AG04449 (cell line): ENCODE measurements at regions of chr5 and their contacts with region 1.

Region 1: GRCh38 chr5:72611118-72611730 is 104.0 kb upstream of the ZNF366 start:
- DNase-seq: no peak
- H3K4me3 ChIP-seq: no peak overlapping the region
- CTCF ChIP-seq: peak; percentile 94

Region 2: DNA sequence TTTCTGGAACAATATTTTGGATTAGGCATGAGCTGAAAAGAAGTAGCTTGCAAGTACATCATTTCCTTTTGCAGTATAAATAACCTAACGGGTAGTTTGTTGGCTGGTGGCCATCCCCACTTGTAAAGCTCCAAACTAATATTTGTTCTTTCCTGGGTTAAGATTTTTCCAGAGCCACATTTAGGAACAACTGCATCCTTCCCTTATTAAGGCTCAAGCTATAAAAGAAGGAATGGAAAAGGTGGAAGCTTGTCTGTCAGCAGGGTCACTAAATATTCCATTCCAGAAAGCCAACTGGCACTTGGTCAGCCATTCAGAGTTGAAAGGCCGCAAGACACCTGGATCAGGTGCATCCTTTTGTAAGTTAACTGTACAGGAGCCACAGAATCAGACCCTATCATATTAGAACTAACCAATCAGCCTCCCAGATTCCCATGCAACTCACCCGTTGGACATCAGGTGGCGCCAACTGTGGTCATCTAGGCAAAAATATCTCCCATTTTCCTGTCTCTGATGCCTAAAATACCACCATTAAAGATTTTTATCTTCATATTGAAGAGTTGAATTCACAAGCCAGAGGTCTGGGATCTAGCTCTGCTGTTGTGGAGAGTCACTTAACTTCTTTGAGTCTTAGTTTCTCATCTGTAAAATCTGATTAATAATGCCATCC is 208.1 kb before region 1 on chr5:
- CTCF ChIA-PET with region 1: no interaction called
- POLR2A ChIA-PET with region 1: no interaction called
- DNase-seq: no peak
- H3K4me3 ChIP-seq: no peak overlapping the region
- CTCF ChIP-seq: peak; percentile 7

Region 3: DNA sequence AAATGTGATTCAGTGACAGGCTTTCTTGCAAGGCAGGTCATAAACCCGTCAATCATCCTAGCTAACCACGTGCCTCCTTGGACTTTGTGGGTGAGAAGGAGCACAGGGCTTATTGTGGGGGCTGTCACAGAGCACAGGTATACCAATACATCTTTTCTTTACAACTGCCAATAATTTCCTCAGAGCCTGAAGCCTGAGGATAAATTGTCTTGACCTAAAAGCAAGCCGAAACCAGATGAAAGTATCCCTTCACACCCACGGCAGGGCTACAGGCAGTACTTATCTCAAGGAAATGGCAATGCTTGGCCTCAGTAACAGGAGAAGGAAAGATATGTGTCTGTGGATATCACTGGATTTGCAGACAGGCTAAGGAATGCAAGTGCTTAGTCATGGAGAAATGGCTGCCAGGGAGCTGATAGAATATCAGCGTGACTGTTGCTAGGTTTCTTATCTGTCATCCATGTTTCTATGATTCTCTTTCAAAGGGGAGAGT is 13.7 kb before region 1 on chr5:
- CTCF ChIA-PET with region 1: interaction called, 51 read pairs
- POLR2A ChIA-PET with region 1: no interaction called
- DNase-seq: peak; percentile 84
- H3K4me3 ChIP-seq: no peak overlapping the region; the same call in 1 of the 2 replicates
- CTCF ChIP-seq: no peak

Region 4: GRCh38 chr5:72628771-72629371 is 17.6 kb after region 1 on chr5:
- CTCF ChIA-PET with region 1: interaction called, 61 read pairs
- POLR2A ChIA-PET with region 1: no interaction called
- DNase-seq: no peak
- H3K4me3 ChIP-seq: no peak overlapping the region
- CTCF ChIP-seq: no peak

Region 5: DNA sequence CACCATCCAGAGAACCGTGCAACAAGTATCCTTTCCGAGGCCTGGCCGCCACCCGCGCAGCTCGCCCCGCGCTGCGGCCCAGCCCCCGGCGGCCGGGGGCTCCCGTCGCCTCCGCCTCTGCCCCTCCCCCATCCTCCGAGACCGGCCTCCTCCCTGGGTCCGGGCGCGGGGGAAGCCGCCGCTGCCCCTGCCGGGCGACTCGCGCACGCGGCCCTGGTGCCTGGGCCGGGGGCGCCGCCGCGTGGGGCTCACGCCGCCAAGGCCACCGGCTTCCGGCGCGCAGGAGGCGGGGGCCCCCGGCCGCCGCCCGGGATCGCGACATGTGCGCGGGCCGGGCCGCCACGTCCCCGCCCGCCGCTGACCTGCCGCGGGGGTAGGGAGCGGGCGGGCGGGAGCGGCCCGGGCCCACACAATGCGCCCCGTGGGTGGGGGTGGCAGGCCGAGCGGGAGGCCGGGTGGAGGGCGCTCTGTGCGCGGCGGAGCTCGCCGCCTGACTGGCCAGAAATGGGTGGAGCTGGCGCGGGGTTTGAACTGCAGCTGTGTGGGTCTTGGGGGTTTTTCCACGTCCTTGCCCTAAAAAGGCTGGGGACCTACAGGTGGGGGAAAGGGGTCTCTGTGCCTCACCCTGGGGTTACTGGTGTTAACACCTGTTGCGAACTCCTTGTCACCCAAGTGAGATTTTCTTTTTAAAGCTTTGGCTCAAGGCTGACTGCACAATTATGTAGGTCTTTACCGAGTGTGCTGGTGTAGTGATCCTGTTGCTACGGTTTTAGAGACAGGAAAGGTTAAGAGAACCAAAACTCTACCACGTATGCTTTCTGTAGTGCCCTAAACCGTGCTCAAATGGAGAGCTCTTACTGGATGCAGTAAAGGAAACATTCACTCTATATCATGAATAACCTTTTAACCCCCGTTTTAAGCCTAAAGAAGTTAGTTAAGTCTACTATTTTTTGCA is 237.5 kb after region 1 on chr5:
- CTCF ChIA-PET with region 1: interaction called, 15 read pairs
- POLR2A ChIA-PET with region 1: interaction called, 3 read pairs
- DNase-seq: no peak
- H3K4me3 ChIP-seq: peak overlapping the region; percentile 84
- CTCF ChIP-seq: no peak